Sigmoid colon (tissue), 7 donors: ENCODE measurements at regions of chr4 and their contacts with region 1.

Region 1: DNA sequence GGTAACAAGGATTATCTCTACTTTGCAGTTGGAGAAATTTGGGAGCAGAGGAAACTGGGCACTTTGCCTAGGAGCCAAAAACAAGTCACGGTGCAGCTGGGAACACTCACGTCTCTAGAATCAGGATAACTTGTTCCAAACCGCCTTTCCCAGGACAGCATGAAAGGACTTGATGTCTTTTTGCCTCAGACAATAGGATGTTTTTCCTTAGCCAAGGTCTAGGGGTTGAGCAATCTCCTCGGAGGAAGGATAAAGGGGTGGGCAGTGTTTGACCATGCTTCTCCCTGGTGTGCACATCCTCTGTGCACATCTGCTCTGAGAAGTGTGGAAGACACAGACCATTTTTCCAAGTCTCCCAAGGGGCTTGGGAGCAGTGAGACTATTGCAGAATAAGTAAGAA is 1.7 kb upstream of the SPARCL1 start:
- DNase-seq: peak; percentile 95
- H3K4me3 ChIP-seq: peak overlapping the region in 3 of 4 donors; percentile 56 to 59 (median 58)
- H3K27ac ChIP-seq: peak overlapping the region; percentile 89 to 91 (median 91)
- H3K4me1 ChIP-seq: peaks cover 0 to 32% (median 28%) of the 10 kb centered on the region in 4 donors
- H3K27me3 ChIP-seq: no peaks in the 10 kb centered on the region
- CTCF ChIP-seq: no peak
- EP300 ChIP-seq: peak; percentile 96 to 99 (median 97)
- POLR2A ChIP-seq: peak in 1 of 2 donors; percentile 49

Region 2: GRCh38 chr4:88017516-88018297 is 486.8 kb after region 1 on chr4:
- intact Hi-C with region 1: loop called (anchors 5 kb)
- DNase-seq: peak; percentile 71
- H3K4me3 ChIP-seq: no peak overlapping the region
- H3K27ac ChIP-seq: peak overlapping the region; percentile 93 to 97 (median 94)
- H3K4me1 ChIP-seq: peaks cover 3 to 94% (median 90%) of the 10 kb centered on the region in 4 donors
- H3K27me3 ChIP-seq: no peaks in the 10 kb centered on the region
- CTCF ChIP-seq: no peak
- EP300 ChIP-seq: peak; percentile 79 to 89 (median 83)
- POLR2A ChIP-seq: no peak